Activated T-helper 1 cell treated with anti-CD3 and anti-CD28 coated beads, Interleukin-12 subunit alpha, Interleukin-12 subunit beta, Interleukin-2, Interleukin-4 antibody, amounts not matched to agents 30 ng/mL and 10 ng/mL and 1 ng/mL, durations not matched to agents 14 hours and 24 hours and 36 hours (primary cell): ENCODE measurements at regions of chr10 and their contacts with region 1.

Region 1: DNA sequence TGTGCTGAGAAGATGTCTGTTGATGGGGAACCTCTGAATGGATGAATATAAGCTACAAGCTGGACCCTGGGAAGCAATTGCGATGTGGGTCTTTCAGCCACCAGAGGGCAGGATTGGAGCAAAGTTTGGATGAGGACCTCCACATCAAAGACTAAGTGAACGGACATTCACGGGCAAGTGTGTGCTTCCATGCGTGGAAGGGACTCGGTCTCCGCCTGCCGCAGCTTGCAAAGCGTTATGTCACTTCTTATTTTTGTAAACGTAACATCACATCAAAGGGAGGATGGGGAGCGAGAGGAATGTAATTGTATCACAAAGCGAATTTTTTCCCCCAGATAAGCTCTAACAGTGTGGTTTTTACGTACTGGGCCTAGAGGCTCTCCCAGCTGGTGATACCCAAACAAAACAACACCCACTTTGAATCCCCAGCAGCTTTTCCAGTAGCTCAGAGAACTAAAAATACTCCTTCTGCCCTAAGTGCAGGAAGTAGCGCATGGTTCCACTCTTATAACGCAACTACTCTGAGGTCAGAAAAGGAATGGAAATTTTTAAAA is 65.0 kb downstream of the VWA2 start:
- DNase-seq: peak; percentile 54
- H3K4me3 Mint-ChIP-seq: peak overlapping the region; percentile 84
- H3K27ac Mint-ChIP-seq: peak overlapping the region; percentile 54
- H3K4me1 Mint-ChIP-seq: peaks cover 24% of the 10 kb centered on the region
- H3K27me3 Mint-ChIP-seq: peaks cover 5% of the 10 kb centered on the region

Region 2: GRCh38 chr10:114173921-114174694 is 130.0 kb before region 1 on chr10 and contains the start of gene CCDC186:
- intact Hi-C with region 1: loop called (anchors 2 kb)
- DNase-seq: peak; percentile 96
- H3K4me3 Mint-ChIP-seq: peak within 1 kb of the TSS; percentile 95
- H3K27ac Mint-ChIP-seq: peak within 1 kb of the TSS; percentile 91
- H3K4me1 Mint-ChIP-seq: peaks cover 35% of the 10 kb centered on the region
- H3K27me3 Mint-ChIP-seq: peaks cover 12% of the 10 kb centered on the region
- total RNA-seq, gene CCDC186: 12.1 and 13.0 TPM in 2 replicates

Region 3: DNA sequence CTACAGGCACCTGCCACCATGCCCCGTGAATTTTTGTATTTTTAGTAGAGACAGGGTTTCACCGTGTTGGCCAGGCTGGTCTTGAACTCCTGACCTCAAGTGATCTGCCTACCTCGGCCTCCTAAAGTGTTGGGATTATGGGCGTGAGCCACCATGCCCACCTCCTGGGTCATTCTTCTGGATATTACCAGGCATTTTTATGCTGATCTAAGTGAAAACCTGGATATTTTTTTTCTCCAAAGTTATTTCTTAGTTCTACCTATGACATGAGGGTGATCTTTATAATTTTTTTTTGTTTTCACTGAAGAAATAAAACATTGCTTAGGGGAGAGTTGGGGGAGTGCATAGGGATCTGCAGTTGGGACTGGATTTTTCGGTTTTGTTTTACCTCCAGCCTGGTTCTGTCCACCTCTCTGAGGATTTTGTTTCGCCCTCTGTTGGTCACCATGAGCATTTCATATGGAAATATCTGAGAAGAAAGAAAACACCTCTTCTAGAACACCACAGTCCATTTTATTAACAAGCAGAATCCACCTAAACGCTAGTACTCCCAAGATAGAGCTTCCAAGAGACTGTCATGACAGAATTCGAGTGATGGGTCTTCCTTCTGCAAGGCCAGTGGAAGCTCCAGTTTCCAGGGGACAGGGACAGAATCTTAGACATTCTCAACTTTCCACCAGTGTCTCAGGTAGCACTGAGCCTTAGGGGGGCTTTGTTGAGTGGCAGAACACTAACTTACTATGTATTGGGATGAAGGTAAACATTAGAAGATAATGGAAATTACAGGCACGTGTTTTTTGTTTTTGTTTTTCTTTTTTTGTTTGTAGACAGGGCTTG is 133.6 kb after region 1 on chr10:
- intact Hi-C with region 1: loop called (anchors 1 kb)
- DNase-seq: no peak
- H3K4me3 Mint-ChIP-seq: no peak overlapping the region
- H3K27ac Mint-ChIP-seq: no peak overlapping the region
- H3K4me1 Mint-ChIP-seq: no peaks in the 10 kb centered on the region
- H3K27me3 Mint-ChIP-seq: no peaks in the 10 kb centered on the region

Region 4: GRCh38 chr10:114541081-114541796 is 237.1 kb after region 1 on chr10:
- intact Hi-C with region 1: loop called (anchors 1 kb)
- DNase-seq: peak; percentile 74
- H3K4me3 Mint-ChIP-seq: peak overlapping the region; percentile 61
- H3K27ac Mint-ChIP-seq: peak overlapping the region; percentile 90
- H3K4me1 Mint-ChIP-seq: peaks cover 82% of the 10 kb centered on the region
- H3K27me3 Mint-ChIP-seq: no peaks in the 10 kb centered on the region

Region 5: GRCh38 chr10:114876602-114877300 is 572.7 kb after region 1 on chr10:
- intact Hi-C with region 1: loop called (anchors 1 kb)
- DNase-seq: peak; percentile 15
- H3K4me3 Mint-ChIP-seq: no peak overlapping the region
- H3K27ac Mint-ChIP-seq: no peak overlapping the region
- H3K4me1 Mint-ChIP-seq: peaks cover 32% of the 10 kb centered on the region
- H3K27me3 Mint-ChIP-seq: peaks cover 21% of the 10 kb centered on the region

Region 6: DNA sequence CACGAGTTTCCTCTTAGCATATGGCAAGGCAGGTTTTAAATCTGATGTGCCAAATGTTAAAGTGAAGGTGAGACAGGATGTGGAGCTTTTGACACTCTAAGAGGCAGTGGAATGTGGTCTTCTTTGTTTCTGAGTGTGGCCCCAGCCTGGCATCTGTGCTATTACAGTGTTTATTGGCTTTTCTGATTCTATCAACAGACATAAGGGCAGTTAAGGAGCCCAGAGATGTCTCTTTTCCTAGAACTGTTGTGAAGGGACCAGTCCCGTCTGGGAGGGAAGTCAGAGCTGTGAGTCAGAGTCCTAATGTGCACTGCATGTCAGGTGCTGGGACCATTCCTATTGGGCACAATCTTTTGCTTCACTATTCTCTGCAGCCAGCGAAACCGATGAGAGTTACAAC is 666.4 kb after region 1 on chr10:
- intact Hi-C with region 1: no loop called
- DNase-seq: no peak
- H3K4me3 Mint-ChIP-seq: no peak overlapping the region
- H3K27ac Mint-ChIP-seq: peak overlapping the region; percentile 1
- H3K4me1 Mint-ChIP-seq: peaks cover 8% of the 10 kb centered on the region
- H3K27me3 Mint-ChIP-seq: no peaks in the 10 kb centered on the region

Region 7: DNA sequence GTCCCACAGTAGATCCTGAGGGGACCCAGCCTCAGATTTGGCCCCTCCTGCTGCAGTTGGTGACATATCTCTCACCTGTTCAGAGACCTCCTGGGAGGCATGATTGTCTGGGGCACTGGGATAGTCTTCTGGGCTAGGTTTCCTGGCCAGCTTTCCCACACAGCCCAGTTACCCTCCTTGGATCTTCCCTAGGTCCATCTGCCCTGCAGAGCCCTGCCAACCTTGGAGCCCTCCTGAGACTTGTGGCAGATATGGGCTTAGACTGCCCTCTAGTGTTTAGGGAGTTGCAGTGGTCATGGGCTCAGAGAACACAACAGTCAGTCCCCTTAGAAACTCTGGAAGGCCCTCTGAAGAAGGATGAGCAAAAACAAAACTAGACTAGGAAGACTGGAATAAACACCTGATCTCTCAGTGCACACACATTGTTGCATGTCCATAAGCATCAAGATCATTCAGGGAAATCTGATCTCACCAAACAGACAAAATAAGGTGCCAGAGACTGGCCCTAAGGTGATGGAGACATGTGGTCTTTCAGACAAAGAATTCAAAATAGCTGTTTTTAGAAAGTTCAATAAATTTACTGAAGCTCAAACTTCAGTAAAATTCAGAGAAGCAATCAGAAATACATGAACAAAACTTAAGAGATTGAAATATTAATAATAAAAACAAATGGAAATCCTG is 1113.6 kb after region 1 on chr10:
- intact Hi-C with region 1: loop called (anchors 5 kb)
- DNase-seq: no peak
- H3K4me3 Mint-ChIP-seq: no peak overlapping the region
- H3K27ac Mint-ChIP-seq: no peak overlapping the region
- H3K4me1 Mint-ChIP-seq: no peaks in the 10 kb centered on the region
- H3K27me3 Mint-ChIP-seq: no peaks in the 10 kb centered on the region